ENCODE measurements at regions of chr3 and their contacts with region 1.

Region 1: GRCh38 chr3:49813497-49814174 is at the start of gene UBA7:
- DNase-seq: peak; percentile 35
- ATAC-seq: peak; percentile 90
- H3K4me3 Mint-ChIP-seq: peak within 1 kb of the TSS; percentile 94
- H3K27ac Mint-ChIP-seq: peak within 1 kb of the TSS; percentile 97
- H3K4me1 Mint-ChIP-seq: peaks cover 51% of the 10 kb centered on the region
- H3K27me3 Mint-ChIP-seq: no peaks in the 10 kb centered on the region
- CTCF ChIP-seq: no peak
- total RNA-seq, gene UBA7: 216 and 237 TPM in 2 replicates

Region 2: DNA sequence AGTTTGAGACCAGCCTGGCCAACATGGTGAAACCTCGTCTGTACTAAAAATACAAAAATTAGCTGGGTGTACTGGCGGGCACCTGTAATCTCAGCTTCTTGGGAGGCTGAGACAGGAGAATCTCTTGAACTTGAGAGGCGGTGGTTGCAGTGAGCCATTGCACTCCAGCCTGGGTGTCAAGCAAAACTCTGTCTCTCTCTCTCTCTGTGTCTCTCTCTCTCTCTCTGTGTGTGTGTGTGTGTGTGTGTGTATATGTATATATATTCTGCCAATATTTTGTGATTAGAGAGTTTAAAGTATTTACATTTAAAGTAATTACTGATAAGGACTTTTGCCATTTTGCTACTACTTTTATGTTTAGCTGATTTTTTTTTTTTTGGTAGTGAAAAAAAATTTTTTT is 142.0 kb after region 1 on chr3:
- CTCF ChIA-PET with region 1: no interaction called
- POLR2A ChIA-PET with region 1: interaction called, 10 read pairs
- intact Hi-C with region 1: no loop called
- DNase-seq: no peak
- ATAC-seq: no peak
- H3K4me3 Mint-ChIP-seq: no peak overlapping the region
- H3K27ac Mint-ChIP-seq: no peak overlapping the region
- H3K4me1 Mint-ChIP-seq: peaks cover 28% of the 10 kb centered on the region
- H3K27me3 Mint-ChIP-seq: no peaks in the 10 kb centered on the region
- CTCF ChIP-seq: no peak